ENCODE measurements at regions of chr18 and their contacts with region 1.

Region 1: GRCh38 chr18:77207540-77207939 is 42.1 kb upstream of the GALR1 start:
- H3K4me3 ChIP-seq: no peak overlapping the region
- H3K27ac ChIP-seq: no peak overlapping the region
- H3K4me1 ChIP-seq: no peaks in the 10 kb centered on the region
- CTCF ChIP-seq: peak; percentile 56; the same call in 1 of the 2 replicates

Region 2: GRCh38 chr18:76982841-76983587 is 224.5 kb before region 1 on chr18:
- CTCF ChIA-PET with region 1: interaction called, 12 read pairs
- POLR2A ChIA-PET with region 1: no interaction called
- H3K4me3 ChIP-seq: no peak overlapping the region
- H3K27ac ChIP-seq: no peak overlapping the region
- H3K4me1 ChIP-seq: no peaks in the 10 kb centered on the region
- CTCF ChIP-seq: peak; percentile 88

Region 3: DNA sequence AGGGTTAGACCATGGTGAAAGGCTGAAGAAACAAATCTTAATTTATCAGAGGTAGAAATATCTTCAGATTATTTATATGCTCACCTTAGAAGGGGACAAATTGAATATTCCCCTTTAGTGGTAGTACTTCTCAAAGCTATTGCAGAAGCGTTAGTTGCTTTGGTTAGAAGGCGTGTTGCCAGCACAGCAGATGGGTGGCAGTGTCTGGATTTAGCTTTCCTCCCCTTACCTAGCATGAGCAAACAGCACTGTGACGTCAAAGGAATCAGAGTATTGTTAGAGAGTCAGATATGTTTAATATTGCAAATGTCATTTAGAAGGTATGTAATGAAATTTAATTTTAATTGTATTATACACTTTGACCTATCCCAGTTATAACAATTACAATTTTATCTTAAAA is 14.9 kb after region 1 on chr18:
- CTCF ChIA-PET with region 1: interaction called, 14 read pairs
- POLR2A ChIA-PET with region 1: no interaction called
- H3K4me3 ChIP-seq: no peak overlapping the region
- H3K27ac ChIP-seq: no peak overlapping the region
- H3K4me1 ChIP-seq: no peaks in the 10 kb centered on the region
- CTCF ChIP-seq: no peak

Region 4: DNA sequence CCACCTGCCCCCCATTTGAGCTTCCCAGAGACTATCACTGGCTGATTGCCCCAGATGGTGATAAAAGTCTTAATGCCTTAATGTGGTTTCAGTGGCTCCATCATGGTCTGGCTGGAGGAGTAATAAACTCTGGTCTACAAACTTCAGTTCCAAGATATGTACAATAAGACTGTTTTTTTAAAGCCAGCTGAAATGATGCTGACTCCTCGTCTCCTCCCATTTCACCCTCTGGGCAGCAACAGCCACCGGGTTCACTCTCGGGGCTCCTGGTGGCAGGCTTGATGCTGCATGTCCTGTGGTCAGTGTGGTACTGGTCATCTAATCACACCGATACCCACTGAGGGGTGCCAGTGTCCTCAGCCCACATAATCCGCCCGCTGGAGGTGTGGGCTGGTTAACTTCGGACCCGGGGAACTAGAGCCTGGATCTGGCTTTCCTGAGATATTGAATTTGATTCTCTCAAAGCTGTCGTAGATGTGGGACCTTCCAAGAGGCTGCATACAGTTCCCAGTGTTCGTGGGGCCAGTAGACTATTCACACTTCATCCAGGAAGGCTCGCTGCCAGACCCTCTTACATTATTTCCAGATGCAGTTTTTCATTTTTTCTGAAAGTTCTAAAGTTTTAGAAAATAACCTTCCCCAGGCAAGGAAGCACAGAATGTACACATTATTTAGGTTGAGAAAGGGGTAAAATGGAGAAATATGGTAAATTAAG is 137.4 kb after region 1 on chr18:
- CTCF ChIA-PET with region 1: interaction called, 10 read pairs
- POLR2A ChIA-PET with region 1: no interaction called
- H3K4me3 ChIP-seq: no peak overlapping the region
- H3K27ac ChIP-seq: no peak overlapping the region
- H3K4me1 ChIP-seq: peaks cover 5% of the 10 kb centered on the region; the same call in 1 of the 2 replicates
- CTCF ChIP-seq: no peak

Measured in HEK293 (cell line).